ENCODE measurements at regions of chr18 and their contacts with region 1.

Region 1: GRCh38 chr18:31685097-31686082 is 1.0 kb upstream of the B4GALT6 start:
- DNase-seq: peak; percentile 73
- H3K4me3 Mint-ChIP-seq: peak overlapping the region; percentile 84
- H3K27ac Mint-ChIP-seq: no peak overlapping the region
- H3K4me1 Mint-ChIP-seq: peaks cover 16% of the 10 kb centered on the region
- H3K27me3 Mint-ChIP-seq: peaks cover 38% of the 10 kb centered on the region

Region 2: DNA sequence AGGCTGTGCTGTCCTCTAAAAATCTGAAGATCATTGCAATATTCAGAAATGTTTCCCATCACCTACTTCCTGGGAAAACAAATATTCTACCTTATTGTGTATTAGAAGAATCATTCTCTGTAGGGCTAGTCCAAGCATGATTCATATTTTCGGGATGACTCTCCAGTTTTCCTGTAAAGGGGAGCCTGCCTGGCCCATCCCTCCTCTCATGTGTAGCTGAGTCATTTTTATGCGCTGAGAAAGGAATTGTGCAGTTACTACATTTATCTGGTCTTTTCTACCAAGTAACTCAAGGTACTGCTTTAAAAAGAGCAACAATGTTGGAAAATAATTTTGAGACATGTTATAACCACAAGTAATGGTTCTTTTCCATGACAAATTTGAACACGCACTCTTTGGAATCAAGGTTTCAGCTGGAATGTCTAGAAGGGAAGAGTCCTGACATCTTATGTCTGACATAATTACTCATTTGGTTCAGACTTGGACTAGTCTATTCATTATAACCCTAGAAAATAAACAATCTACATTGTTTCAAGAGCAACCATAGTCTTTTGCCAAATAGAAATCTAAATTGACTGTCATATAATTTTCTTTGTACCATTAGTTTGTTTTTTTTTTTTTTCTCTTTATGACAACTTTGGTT is 231.2 kb before region 1 on chr18:
- CTCF ChIA-PET with region 1: no interaction called
- intact Hi-C with region 1: no loop called
- DNase-seq: no peak
- H3K4me3 Mint-ChIP-seq: no peak overlapping the region
- H3K27ac Mint-ChIP-seq: no peak overlapping the region
- H3K4me1 Mint-ChIP-seq: no peaks in the 10 kb centered on the region
- H3K27me3 Mint-ChIP-seq: peaks cover 6% of the 10 kb centered on the region

Region 3: DNA sequence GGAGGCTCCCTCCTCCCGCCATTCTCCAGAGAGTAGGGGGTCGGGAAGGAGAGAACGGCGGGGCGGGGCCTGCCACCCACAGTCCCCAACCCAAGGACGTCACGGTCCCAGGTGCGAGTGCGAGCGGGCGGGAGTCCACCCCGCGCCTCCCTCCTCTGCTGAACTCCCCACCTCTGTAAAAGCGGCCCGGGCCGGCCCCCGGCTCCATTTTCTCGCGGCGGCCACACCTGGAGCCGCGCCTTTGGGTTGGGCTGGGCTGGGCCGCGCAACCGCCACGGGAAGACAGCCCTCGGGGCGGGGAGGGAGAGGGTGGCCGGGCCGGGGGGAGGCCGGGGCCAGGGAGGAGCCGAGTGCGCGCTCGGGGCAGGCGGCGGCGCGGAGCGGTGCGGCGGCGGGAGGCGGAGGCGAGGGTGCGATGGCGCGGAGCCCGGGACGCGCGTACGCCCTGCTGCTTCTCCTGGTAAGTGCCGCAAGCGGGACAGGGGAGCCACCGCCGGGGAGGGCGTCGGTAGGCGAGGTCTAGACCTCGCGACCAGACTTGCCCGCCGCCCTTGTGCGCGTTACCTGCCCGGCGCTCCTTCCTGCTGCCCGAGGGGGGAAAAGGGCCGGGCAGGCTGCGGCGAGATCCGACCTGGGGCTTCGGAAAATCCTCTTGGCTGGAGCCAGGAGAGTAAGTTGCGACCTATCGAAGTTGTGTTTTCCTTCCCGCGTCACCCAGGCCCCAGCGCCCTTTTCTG is 187.4 kb before region 1 on chr18 and contains the start of gene DSG2:
- CTCF ChIA-PET with region 1: no interaction called
- intact Hi-C with region 1: loop called (anchors 10 kb)
- DNase-seq: peak; percentile 39
- H3K4me3 Mint-ChIP-seq: peak within 1 kb of the TSS; percentile 73
- H3K27ac Mint-ChIP-seq: no peak within 1 kb of the TSS
- H3K4me1 Mint-ChIP-seq: peaks cover 6% of the 10 kb centered on the region
- H3K27me3 Mint-ChIP-seq: peaks cover 39% of the 10 kb centered on the region
- total RNA-seq, gene DSG2: 0.45 to 0.49 TPM

Region 4: GRCh38 chr18:31610286-31611205 is 74.8 kb before region 1 on chr18:
- CTCF ChIA-PET with region 1: no interaction called
- intact Hi-C with region 1: no loop called
- DNase-seq: no peak
- H3K4me3 Mint-ChIP-seq: no peak overlapping the region
- H3K27ac Mint-ChIP-seq: no peak overlapping the region
- H3K4me1 Mint-ChIP-seq: no peaks in the 10 kb centered on the region
- H3K27me3 Mint-ChIP-seq: peaks cover under 1% of the 10 kb centered on the region

Region 5: DNA sequence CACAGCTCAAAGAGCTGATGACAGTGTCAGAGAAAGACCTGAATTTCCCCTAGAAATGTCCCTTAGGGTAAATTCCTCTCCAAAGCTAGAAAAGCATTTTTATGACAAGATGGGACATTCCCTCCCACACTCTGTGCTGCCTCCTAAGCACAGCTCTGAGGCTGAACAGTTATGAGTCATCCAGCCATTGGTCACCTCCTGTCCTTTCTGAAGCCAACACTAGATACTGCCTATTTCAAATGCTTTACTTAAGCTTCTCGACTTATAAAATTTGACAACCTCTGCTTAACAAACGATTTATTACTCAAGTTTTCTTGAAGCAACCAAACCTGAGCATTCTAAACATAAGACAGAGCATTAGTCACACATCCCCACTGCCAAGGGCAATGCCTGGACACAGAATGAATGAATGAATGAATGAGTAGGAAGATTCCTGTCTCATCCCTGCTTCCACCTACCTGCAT is 36.4 kb before region 1 on chr18:
- CTCF ChIA-PET with region 1: interaction called, 5 read pairs
- intact Hi-C with region 1: loop called (anchors 2 kb)
- DNase-seq: peak; percentile 30
- H3K4me3 Mint-ChIP-seq: no peak overlapping the region
- H3K27ac Mint-ChIP-seq: no peak overlapping the region
- H3K4me1 Mint-ChIP-seq: peaks cover 11% of the 10 kb centered on the region
- H3K27me3 Mint-ChIP-seq: peaks cover 26% of the 10 kb centered on the region

Region 6: GRCh38 chr18:31667185-31667584 is 18.2 kb before region 1 on chr18:
- CTCF ChIA-PET with region 1: interaction called, 12 read pairs
- intact Hi-C with region 1: no loop called
- DNase-seq: no peak
- H3K4me3 Mint-ChIP-seq: no peak overlapping the region
- H3K27ac Mint-ChIP-seq: no peak overlapping the region
- H3K4me1 Mint-ChIP-seq: no peaks in the 10 kb centered on the region
- H3K27me3 Mint-ChIP-seq: peaks cover 3% of the 10 kb centered on the region

Measured in activated naive CD4-positive, alpha-beta T cell treated with anti-CD3 and anti-CD28 coated beads for 36 hours (primary cell).